ENCODE measurements at regions of chr7 and their contacts with region 1.

Region 1: DNA sequence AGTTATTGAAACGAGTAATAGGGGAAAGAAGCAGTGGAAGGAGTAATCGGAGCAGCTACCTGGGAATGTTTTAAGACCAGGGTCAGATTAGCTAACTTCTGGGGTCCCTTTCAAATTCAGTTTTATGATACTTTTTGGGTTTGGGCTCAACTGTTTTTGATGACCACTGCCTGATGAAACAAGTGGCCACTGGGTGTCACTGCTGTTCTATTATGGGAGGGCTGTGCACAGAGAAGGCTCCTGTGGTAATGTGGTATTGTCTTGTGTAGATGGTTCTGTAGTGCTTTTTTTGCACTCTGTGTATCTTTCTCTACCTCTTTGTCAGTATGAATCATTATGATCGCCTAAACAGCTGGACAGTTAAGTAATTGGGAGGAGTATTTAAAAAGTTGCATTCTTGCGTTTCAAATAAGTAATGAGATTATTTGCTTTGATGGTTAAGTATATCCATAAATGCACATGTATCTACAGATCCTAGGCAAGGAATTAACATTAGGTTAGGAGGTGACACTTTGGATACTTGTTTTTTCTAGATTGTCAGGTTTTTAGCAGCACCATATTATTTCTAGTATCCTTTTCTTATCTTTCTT is 128.4 kb downstream of the ABCA13 start:
- DNase-seq: peak in 8 of 10 donors; percentile 57 to 78 (median 65)
- H3K4me3 ChIP-seq: no peak overlapping the region
- H3K27ac ChIP-seq: no peak overlapping the region
- H3K27me3 ChIP-seq: peaks cover 0 to 5% (median 0%) of the 10 kb centered on the region in 45 donors
- CTCF ChIP-seq: peak; percentile 39 to 93 (median 78)

Region 2: GRCh38 chr7:48875045-48875916 is 575.6 kb after region 1 on chr7:
- intact Hi-C with region 1: loop called (anchors 2 to 10 kb)
- DNase-seq: peak; percentile 50 to 78 (median 62)
- H3K4me3 ChIP-seq: no peak overlapping the region
- H3K27ac ChIP-seq: no peak overlapping the region
- H3K27me3 ChIP-seq: peaks cover 0 to 3% (median 0%) of the 10 kb centered on the region in 45 donors
- CTCF ChIP-seq: peak in 55 of 56 donors; percentile 20 to 90 (median 66)

Region 3: DNA sequence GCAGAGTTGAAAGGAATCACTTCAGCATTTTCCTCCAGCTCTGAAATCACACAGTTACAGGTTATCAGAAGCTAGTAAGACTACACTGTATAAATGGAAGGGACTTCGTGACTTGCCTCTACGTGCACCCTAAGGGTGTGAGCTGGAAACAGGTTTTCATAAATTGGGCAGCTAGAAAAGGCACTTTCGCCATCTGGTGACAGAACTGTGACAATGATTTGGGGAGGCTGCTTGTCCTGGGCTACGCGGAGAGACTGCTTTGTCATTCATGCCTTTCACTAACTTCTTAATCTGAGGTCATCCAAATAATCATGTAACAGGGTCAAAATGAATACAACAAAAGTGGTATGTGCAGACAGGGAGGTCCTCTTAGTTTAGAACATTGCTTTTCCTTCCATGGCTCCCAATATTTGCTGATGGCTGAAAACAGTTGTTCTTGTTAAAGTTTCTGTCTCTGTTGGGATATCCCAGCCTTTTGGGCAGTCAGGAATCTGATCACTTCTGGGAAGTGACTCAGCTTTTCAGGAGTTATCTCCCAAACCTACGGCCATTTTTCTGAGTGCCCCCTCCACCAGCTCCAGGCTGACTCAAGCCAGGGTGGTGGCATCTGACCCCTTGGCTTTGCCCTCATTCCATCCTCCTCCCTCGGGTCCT is 1491.5 kb after region 1 on chr7:
- intact Hi-C with region 1: loop called in 1 of 2 experiments (anchors 10 kb)
- DNase-seq: peak in 2 of 10 donors; percentile 34 to 65
- H3K4me3 ChIP-seq: no peak overlapping the region
- H3K27ac ChIP-seq: no peak overlapping the region
- H3K27me3 ChIP-seq: peaks cover 0 to 5% (median 0%) of the 10 kb centered on the region in 45 donors
- CTCF ChIP-seq: peak in 51 of 56 donors; percentile 13 to 68 (median 44)

Region 4: DNA sequence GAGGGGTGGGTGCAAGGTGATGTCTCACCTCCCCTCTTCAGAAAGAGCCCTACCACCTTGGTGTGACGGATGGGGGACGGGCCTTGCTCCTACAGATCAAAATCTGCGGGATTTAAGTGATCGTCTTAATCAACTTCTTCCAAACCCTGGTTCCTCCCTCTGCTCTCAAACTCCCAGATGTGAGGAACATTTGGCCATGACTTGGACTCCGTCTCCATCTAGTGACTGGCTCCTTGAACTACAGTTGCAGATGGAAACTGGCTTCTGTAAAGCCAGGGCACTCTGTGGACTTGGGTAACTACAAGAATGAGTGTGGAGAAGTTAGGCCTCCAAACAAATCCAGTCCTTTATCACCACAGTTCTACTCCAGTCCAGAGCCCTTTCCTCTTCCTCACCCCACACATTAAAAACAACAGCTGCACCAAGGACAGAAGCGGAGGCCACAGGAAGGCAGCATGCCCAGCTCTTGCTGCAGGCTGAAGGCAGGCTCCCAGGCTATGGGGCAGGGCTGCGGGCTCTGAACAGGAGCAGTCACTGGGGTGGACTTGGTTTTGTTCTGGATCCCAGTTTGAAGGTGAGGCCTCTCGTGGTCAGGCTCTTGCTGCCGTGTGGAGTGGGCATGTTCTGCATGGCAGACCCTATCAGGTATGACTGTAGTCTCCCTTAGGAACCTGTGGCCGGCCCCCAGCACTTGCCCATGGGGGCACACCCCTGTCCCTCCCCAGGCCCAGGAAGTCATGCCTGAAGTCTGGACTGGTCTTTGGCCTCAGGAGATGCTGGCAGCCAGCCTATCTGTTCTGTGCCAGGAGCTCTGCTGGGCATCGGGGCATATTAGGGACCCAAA is 1553.2 kb after region 1 on chr7:
- intact Hi-C with region 1: loop called (anchors 5 to 10 kb)
- DNase-seq: peak in 2 of 10 donors; percentile 58 to 66
- H3K4me3 ChIP-seq: no peak overlapping the region
- H3K27ac ChIP-seq: peak overlapping the region in 1 of 59 donors; percentile 43
- H3K27me3 ChIP-seq: peaks cover 0 to 4% (median 0%) of the 10 kb centered on the region in 45 donors
- CTCF ChIP-seq: peak; percentile 24 to 82 (median 70)